ENCODE measurements at regions of chr19 and their contacts with region 1.

Region 1: DNA sequence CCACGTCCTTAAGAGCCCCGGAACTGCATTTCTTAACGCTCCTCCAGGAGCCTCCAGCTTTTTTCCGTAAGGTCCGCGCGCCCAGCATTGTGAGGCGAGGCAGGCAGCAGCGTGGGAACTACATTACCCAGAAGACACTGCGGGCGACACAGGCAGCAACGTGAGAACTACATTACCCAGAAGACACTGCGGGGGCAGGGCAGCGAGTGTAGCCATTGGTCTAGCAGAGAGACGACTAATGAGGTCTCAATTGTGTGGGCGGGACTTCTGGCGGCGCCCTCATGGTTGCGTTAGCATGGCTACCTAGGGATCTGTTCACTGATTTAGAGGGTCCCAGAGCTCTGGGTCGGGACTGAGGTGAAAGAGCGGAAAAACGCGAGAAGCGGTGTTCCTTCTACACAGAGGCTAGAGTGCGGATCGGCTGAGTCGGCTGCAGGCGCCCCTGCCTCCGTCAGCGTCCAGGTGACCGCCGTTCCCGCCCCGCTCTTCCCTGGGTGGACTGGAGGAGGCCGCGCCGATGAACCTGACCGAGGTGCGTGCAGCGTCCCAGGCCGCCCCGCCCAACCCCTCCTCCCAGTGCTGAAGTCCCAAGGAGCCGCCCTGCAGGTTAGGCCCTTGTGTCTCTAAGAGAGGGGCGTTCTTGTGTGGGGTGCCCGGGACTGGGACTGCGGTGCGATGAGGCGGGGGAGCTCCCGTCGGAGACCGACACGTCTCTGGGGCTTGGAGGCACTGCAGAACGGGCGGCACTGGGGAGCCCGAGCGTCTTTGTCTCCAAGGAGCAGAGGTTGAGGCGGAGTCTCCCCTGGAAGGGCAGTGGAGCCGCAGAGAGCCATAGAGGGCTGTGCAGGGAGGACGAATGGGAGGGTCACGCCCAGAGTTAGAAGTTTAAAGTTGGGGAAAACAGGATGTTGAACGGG is at the start of gene ZNF749:
- DNase-seq: peak; percentile 76 to 100 (median 96)
- ATAC-seq: peak; percentile 100
- H3K4me3 ChIP-seq: peak within 1 kb of the TSS; percentile 75
- H3K4me3 Mint-ChIP-seq: peak within 1 kb of the TSS; percentile 92 to 100 (median 98)
- H3K27ac ChIP-seq: peak within 1 kb of the TSS; percentile 77
- H3K27ac Mint-ChIP-seq: peak within 1 kb of the TSS; percentile 79 to 98 (median 95)
- H3K4me1 ChIP-seq: peaks cover 7 to 14% of the 10 kb centered on the region in 2 donors
- H3K4me1 Mint-ChIP-seq: peaks cover 23 to 42% (median 38%) of the 10 kb centered on the region in 7 donors
- H3K27me3 ChIP-seq: no peaks in the 10 kb centered on the region
- H3K27me3 Mint-ChIP-seq: no peaks in the 10 kb centered on the region
- total RNA-seq, gene ZNF749: 8.9 to 17.9 (median 13.2) TPM

Region 2: GRCh38 chr19:56393119-56394012 is 1042.0 kb before region 1 on chr19 and contains the start of gene ZNF582:
- CTCF ChIA-PET with region 1: no interaction called
- POLR2A ChIA-PET with region 1: no interaction called
- intact Hi-C with region 1: loop called in 1 of 2 experiments (anchors 1 kb)
- DNase-seq: peak; percentile 79 to 94 (median 90)
- ATAC-seq: peak; percentile 98
- H3K4me3 ChIP-seq: peak within 1 kb of the TSS; percentile 90
- H3K4me3 Mint-ChIP-seq: peak within 1 kb of the TSS; percentile 89 to 99 (median 98)
- H3K27ac ChIP-seq: peak within 1 kb of the TSS; percentile 92
- H3K27ac Mint-ChIP-seq: peak within 1 kb of the TSS; percentile 91 to 99 (median 96)
- H3K4me1 ChIP-seq: peaks cover 3 to 5% of the 10 kb centered on the region in 2 donors
- H3K4me1 Mint-ChIP-seq: peaks cover 3 to 32% (median 10%) of the 10 kb centered on the region in 7 donors
- H3K27me3 ChIP-seq: no peaks in the 10 kb centered on the region
- H3K27me3 Mint-ChIP-seq: no peaks in the 10 kb centered on the region
- total RNA-seq, gene ZNF582: 1.7 to 7.6 (median 3.3) TPM

Region 3: DNA sequence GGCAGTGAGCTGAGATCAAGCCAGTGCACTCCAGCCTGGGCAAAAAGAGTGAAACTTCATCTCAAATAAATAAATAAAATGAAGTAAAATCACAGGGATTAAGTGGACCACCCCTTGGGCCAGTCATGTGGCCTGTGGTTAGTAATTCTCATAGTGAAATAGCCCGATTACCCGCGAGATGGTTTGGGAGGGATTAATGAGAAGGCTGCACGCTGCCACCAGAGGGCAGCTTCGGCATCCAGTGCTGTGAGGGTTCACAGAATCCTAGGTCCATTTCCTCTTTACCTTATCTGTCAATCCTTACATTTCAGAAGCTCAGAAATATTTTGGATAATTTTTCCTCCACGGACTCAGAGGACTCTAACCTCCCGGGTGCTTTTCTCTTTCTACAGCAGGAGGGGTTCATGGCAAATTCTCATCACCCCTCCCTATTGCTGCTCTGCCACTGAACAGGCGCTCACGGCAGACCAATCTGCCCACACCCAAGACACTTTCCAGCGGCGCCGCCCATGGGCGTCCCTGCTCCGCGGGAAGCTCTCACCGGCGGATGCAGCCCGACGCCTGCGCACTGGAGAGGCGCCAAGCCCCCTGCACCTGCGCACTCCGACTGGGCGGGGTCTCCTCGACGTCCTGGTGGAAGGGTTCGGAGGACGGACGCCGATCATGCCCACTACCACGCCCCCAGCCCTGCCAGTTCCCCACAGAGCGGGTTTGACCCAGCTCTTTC is 774.8 kb before region 1 on chr19:
- CTCF ChIA-PET with region 1: no interaction called
- POLR2A ChIA-PET with region 1: no interaction called
- intact Hi-C with region 1: no loop called
- DNase-seq: no peak
- ATAC-seq: no peak
- H3K4me3 ChIP-seq: no peak overlapping the region
- H3K4me3 Mint-ChIP-seq: peak overlapping the region in 1 of 10 donors; percentile 25
- H3K27ac ChIP-seq: no peak overlapping the region
- H3K27ac Mint-ChIP-seq: no peak overlapping the region
- H3K4me1 ChIP-seq: no peaks in the 10 kb centered on the region
- H3K4me1 Mint-ChIP-seq: no peaks in the 10 kb centered on the region
- H3K27me3 ChIP-seq: no peaks in the 10 kb centered on the region
- H3K27me3 Mint-ChIP-seq: no peaks in the 10 kb centered on the region

Region 4: DNA sequence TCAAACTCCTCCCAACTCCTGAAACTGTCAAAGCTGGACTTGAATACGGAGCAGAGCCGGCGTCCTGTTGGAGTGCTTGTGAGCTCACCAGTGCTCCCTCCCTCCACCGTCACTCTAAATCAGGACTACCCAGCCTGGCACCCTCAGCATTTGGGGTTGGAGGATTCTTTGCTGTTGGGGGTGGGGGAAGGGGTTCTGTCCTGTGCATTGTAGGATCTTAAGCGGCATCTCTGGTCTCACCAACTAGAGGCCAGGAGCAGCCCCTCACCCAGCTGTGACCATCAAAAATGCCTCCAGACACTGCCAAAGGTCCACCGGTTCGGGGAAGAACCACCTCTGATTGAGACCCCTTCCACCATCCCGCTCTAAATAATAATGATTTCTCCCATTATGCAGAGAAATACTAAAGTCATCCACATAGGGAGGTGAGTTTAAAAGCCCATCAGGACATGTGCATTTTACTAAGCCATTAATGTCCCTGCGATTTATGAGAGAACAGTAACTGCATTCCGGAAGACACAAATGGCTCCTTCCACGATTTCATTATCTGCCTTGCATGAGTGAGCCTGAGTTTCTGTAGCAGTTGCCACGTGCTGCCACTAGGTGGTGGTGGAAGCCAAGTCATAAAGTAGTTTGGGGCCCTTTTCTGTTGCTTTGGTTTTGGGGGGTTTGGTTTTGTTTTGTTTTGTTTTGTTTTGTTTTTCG is 331.6 kb before region 1 on chr19:
- CTCF ChIA-PET with region 1: no interaction called
- POLR2A ChIA-PET with region 1: no interaction called
- intact Hi-C with region 1: no loop called
- DNase-seq: peak; percentile 12 to 65 (median 28)
- ATAC-seq: peak; percentile 82
- H3K4me3 ChIP-seq: no peak overlapping the region
- H3K4me3 Mint-ChIP-seq: peak overlapping the region in 5 of 10 donors; percentile 13 to 69 (median 42)
- H3K27ac ChIP-seq: no peak overlapping the region
- H3K27ac Mint-ChIP-seq: peak overlapping the region in 2 of 9 donors; percentile 28 to 29
- H3K4me1 ChIP-seq: no peaks in the 10 kb centered on the region
- H3K4me1 Mint-ChIP-seq: peaks cover 0 to 10% (median 4%) of the 10 kb centered on the region in 7 donors
- H3K27me3 ChIP-seq: no peaks in the 10 kb centered on the region
- H3K27me3 Mint-ChIP-seq: peaks cover 0 to 25% (median 17%) of the 10 kb centered on the region in 5 donors

Region 5: GRCh38 chr19:57320180-57321084 is 114.9 kb before region 1 on chr19 and contains the start of gene ZNF543:
- CTCF ChIA-PET with region 1: no interaction called
- POLR2A ChIA-PET with region 1: no interaction called
- intact Hi-C with region 1: loop called in 1 of 2 experiments (anchors 1 kb)
- DNase-seq: peak; percentile 78 to 90 (median 84)
- ATAC-seq: peak; percentile 98
- H3K4me3 ChIP-seq: peak within 1 kb of the TSS; percentile 76
- H3K4me3 Mint-ChIP-seq: peak within 1 kb of the TSS; percentile 87 to 98 (median 94)
- H3K27ac ChIP-seq: peak within 1 kb of the TSS; percentile 83
- H3K27ac Mint-ChIP-seq: peak within 1 kb of the TSS; percentile 82 to 98 (median 96)
- H3K4me1 ChIP-seq: peaks cover 0 to 18% of the 10 kb centered on the region in 2 donors
- H3K4me1 Mint-ChIP-seq: peaks cover 14 to 30% (median 25%) of the 10 kb centered on the region in 7 donors
- H3K27me3 ChIP-seq: peaks cover 0 to 6% of the 10 kb centered on the region in 2 donors
- H3K27me3 Mint-ChIP-seq: peaks cover 20 to 31% (median 24%) of the 10 kb centered on the region in 5 donors
- total RNA-seq, gene ZNF543: 3.6 to 9.0 (median 8.0) TPM

Region 6: DNA sequence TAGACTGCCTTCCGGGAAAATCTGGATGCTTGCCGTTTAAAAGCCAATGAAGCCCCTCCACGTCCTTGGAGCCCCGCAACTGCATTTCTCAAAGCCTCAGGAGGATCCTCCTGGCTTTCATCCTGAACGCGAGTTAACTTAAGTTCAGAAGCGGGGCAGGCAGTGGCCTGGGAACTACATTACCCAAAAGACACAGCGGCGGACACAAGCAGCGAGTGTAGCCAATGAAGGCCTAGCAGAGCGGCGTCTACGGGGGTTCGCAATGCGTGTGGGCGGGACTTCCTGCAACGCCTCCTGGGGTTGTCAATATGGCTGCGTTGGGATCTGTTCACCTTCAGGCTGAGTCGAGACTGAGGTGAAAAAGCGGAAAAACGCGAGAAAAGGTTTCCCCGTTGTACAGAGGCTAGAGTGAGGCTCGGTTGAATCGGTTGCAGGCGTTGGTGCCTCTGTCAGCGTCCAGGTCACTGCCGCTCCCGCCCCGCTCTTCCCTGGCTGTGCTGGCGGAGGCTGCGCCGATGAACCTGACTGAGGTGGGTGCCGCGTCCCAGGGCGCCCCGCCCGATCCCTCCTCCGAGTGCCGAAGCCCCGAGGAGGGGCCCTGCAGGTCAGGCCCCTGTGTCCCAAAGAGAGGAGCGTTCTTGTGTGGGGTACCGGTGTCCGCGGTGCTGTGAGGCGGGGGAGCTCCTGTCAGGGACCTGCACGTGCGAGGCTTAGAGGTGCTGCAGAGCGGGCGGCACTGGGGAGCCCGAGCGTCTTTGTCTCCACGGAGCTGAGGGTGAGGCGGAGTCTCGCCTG is 24.2 kb before region 1 on chr19 and contains the start of gene ZNF17:
- CTCF ChIA-PET with region 1: no interaction called
- POLR2A ChIA-PET with region 1: no interaction called
- intact Hi-C with region 1: loop called (anchors 1 kb)
- DNase-seq: peak; percentile 72 to 95 (median 88)
- ATAC-seq: peak; percentile 100
- H3K4me3 ChIP-seq: peak within 1 kb of the TSS; percentile 80
- H3K4me3 Mint-ChIP-seq: peak within 1 kb of the TSS; percentile 85 to 97 (median 96)
- H3K27ac ChIP-seq: peak within 1 kb of the TSS; percentile 80
- H3K27ac Mint-ChIP-seq: peak within 1 kb of the TSS; percentile 78 to 96 (median 92)
- H3K4me1 ChIP-seq: peaks cover 3 to 8% of the 10 kb centered on the region in 2 donors
- H3K4me1 Mint-ChIP-seq: peaks cover 20 to 46% (median 34%) of the 10 kb centered on the region in 7 donors
- H3K27me3 ChIP-seq: no peaks in the 10 kb centered on the region
- H3K27me3 Mint-ChIP-seq: no peaks in the 10 kb centered on the region
- total RNA-seq, gene ZNF17: 9.3 to 27.8 (median 17.2) TPM

Region 7: DNA sequence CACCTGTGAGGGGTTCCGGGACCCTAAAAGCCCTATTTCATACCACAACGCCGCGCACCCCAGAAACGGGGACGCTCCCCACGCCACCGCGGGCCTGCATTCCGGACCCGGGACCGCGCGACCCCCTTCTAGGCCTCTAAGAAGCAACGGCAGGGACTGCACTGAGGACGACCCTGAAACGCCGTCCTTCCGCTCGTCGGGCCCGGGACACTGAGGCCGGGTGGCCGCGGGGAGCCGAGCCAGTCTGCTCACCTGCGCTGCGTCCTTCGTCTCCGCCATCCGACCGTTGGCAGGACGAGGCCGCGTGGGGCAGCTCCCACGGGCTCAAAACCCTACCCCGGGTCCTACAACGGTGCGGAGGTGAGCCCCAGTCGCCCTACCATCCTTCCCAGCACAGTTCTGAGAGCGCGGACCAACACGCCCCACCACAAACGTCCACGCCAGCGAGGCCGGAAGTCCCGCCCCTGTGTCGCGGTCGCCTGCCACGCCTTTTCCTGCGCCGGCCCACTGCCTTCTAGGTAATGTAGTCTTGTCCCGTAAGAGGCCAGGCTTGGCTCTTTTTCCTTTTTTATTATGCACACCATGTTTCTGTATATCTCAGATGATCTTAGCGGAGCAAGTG is 124.2 kb after region 1 on chr19 and contains the start of gene ZNF550:
- CTCF ChIA-PET with region 1: no interaction called
- POLR2A ChIA-PET with region 1: no interaction called
- intact Hi-C with region 1: loop called (anchors 1 kb)
- DNase-seq: peak; percentile 71 to 85 (median 84)
- ATAC-seq: peak; percentile 99
- H3K4me3 ChIP-seq: peak within 1 kb of the TSS; percentile 89
- H3K4me3 Mint-ChIP-seq: peak within 1 kb of the TSS; percentile 87 to 99 (median 98)
- H3K27ac ChIP-seq: peak within 1 kb of the TSS; percentile 82
- H3K27ac Mint-ChIP-seq: peak within 1 kb of the TSS; percentile 81 to 96 (median 91)
- H3K4me1 ChIP-seq: peaks cover 16 to 19% of the 10 kb centered on the region in 2 donors
- H3K4me1 Mint-ChIP-seq: peaks cover 21 to 45% (median 33%) of the 10 kb centered on the region in 7 donors
- H3K27me3 ChIP-seq: no peaks in the 10 kb centered on the region
- H3K27me3 Mint-ChIP-seq: peaks cover 0 to 16% (median 4%) of the 10 kb centered on the region in 5 donors
- total RNA-seq, gene ZNF550: 12.9 to 56.2 (median 23.5) TPM

Region 8: GRCh38 chr19:57613941-57614743 is 178.8 kb after region 1 on chr19 and contains the start of gene ZNF134:
- CTCF ChIA-PET with region 1: no interaction called
- POLR2A ChIA-PET with region 1: interaction called, 3 read pairs
- intact Hi-C with region 1: loop called (anchors 1 kb)
- DNase-seq: peak; percentile 74 to 90 (median 84)
- ATAC-seq: peak; percentile 100
- H3K4me3 ChIP-seq: peak within 1 kb of the TSS; percentile 94
- H3K4me3 Mint-ChIP-seq: peak within 1 kb of the TSS; percentile 79 to 95 (median 90)
- H3K27ac ChIP-seq: peak within 1 kb of the TSS; percentile 76
- H3K27ac Mint-ChIP-seq: peak within 1 kb of the TSS; percentile 78 to 92 (median 86)
- H3K4me1 ChIP-seq: peaks cover 14 to 15% of the 10 kb centered on the region in 2 donors
- H3K4me1 Mint-ChIP-seq: peaks cover 18 to 43% (median 34%) of the 10 kb centered on the region in 7 donors
- H3K27me3 ChIP-seq: no peaks in the 10 kb centered on the region
- H3K27me3 Mint-ChIP-seq: no peaks in the 10 kb centered on the region
- total RNA-seq, gene ZNF134: 14.6 to 33.9 (median 25.7) TPM

Region 9: DNA sequence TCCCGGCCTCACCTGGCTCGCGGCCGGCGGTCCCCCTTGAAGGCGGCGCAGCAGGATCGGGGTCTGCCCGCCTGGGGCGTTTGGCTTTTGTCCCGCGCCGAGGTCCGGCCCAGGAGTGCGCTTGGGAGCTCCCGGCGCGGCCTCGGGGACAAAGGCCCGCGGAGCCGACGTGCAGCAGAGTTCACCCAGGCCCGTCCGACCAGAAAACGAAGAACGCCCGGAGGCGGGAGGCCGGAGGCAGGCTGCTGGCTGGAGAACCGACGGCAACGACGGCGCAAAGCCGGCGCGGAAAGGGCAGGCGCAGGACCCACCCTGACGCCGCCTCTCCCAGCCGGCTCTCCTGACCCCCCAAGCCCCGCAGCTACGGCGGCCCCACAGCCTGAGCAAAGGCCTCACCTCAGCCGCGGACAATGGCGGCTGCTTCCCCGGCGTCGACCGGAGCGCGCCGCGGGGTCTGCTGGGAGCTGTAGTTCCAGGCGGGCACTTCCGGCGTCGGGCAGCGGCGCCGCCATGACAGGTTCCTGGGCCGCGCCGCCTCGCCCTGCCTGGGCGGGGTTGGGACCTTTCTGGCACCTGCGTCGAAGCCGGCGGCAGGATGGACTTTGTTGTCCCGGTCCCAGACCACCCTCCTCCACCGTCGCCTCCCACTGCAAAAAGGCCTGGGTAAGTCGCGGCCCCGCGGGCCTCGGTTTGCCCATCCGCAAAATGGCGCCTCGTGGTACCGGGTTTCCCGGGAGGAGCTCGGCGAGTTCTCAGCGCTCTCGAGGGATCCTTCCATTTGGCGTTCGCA is 567.3 kb after region 1 on chr19 and contains the start of gene ZNF606:
- CTCF ChIA-PET with region 1: no interaction called
- POLR2A ChIA-PET with region 1: no interaction called
- intact Hi-C with region 1: loop called in 1 of 2 experiments (anchors 1 kb)
- DNase-seq: peak; percentile 79 to 87 (median 85)
- ATAC-seq: peak; percentile 100
- H3K4me3 ChIP-seq: peak within 1 kb of the TSS; percentile 91
- H3K4me3 Mint-ChIP-seq: peak within 1 kb of the TSS; percentile 80 to 90 (median 88)
- H3K27ac ChIP-seq: peak within 1 kb of the TSS; percentile 90
- H3K27ac Mint-ChIP-seq: peak within 1 kb of the TSS; percentile 79 to 94 (median 88)
- H3K4me1 ChIP-seq: peaks cover 14 to 18% of the 10 kb centered on the region in 2 donors
- H3K4me1 Mint-ChIP-seq: peaks cover 15 to 40% (median 27%) of the 10 kb centered on the region in 7 donors
- H3K27me3 ChIP-seq: no peaks in the 10 kb centered on the region
- H3K27me3 Mint-ChIP-seq: no peaks in the 10 kb centered on the region
- total RNA-seq, gene ZNF606: 11.9 to 37.5 (median 15.3) TPM

Measured in naive thymus-derived CD4-positive, alpha-beta T cell (primary cell).